IMR-90 (cell line): ENCODE measurements at regions of chr7 and their contacts with region 1.

Region 1: GRCh38 chr7:131424219-131424822 is 96.6 kb downstream of the MKLN1 start:
- DNase-seq: peak; percentile 58
- ATAC-seq: peak; percentile 87
- H3K4me3 ChIP-seq: no peak overlapping the region
- H3K27ac ChIP-seq: no peak overlapping the region
- H3K4me1 ChIP-seq: no peaks in the 10 kb centered on the region
- H3K27me3 ChIP-seq: no peaks in the 10 kb centered on the region
- CTCF ChIP-seq: peak; percentile 64
- POLR2A ChIP-seq: no peak
- RAD21 ChIP-seq: peak; percentile 66

Region 2: DNA sequence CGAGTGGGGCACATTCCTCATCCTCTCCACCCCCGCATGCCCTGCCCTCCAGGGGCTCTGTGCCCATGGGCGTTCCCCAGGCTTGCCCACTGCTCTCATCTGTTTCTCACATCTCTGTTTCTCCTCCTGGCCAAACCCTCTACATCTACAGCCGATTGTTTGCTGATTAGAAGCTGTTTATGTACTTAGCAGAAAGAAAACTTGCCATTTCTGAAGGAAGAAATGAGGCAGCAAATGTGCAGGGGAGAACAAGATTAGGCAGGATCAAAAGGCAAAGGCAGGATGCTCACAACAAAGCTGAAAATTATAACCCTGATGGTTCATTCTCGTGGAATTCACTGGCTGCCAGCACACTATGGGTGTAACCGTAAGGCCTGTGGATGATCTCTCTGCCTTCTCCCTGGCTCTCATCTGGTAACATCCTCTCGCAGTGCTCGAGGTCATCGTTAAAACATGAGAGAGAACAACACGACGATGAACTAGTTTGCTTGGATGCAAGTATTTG is 578.7 kb before region 1 on chr7:
- CTCF ChIA-PET with region 1: no interaction called
- POLR2A ChIA-PET with region 1: no interaction called
- dilution Hi-C with region 1: no loop called
- in situ Hi-C with region 1: no loop called
- intact Hi-C with region 1: no loop called
- DNase-seq: peak; percentile 89
- ATAC-seq: peak; percentile 89
- H3K4me3 ChIP-seq: no peak overlapping the region
- H3K27ac ChIP-seq: peak overlapping the region; percentile 87
- H3K4me1 ChIP-seq: peaks cover 6% of the 10 kb centered on the region
- H3K27me3 ChIP-seq: no peaks in the 10 kb centered on the region
- CTCF ChIP-seq: no peak
- POLR2A ChIP-seq: no peak
- RAD21 ChIP-seq: no peak

Region 3: DNA sequence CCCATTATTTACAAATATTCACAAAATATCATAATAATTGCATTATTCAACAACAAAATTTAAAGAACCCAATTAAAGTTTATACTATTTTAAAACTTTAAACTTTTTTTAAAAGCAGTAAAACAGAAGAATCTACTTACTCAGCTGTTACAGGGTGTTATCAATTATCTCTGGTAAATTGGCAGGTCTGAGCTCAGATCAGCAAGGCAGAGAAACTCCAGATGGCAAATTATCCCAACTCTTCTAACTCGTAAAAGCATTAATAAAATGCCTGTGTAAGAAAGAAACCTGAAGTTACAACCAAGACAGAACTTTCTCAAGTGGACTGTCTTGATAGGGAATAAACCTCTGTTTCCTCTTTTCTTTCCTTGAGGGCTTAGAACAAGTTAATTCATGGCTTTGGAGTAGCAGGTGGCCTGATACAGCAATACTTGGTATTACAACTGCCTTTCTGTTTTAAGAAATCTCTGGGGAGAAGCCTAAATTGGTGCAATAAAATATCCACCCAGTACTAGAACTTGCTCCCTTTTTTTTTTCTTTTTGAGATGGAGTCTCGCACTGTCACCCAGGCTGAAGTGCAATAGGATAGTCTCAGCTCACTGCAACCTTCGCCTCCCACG is 371.9 kb before region 1 on chr7:
- CTCF ChIA-PET with region 1: no interaction called
- POLR2A ChIA-PET with region 1: no interaction called
- dilution Hi-C with region 1: no loop called
- in situ Hi-C with region 1: no loop called
- intact Hi-C with region 1: no loop called
- DNase-seq: no peak
- ATAC-seq: no peak
- H3K4me3 ChIP-seq: no peak overlapping the region
- H3K27ac ChIP-seq: no peak overlapping the region
- H3K4me1 ChIP-seq: peaks cover 3% of the 10 kb centered on the region
- H3K27me3 ChIP-seq: no peaks in the 10 kb centered on the region
- CTCF ChIP-seq: no peak
- POLR2A ChIP-seq: no peak
- RAD21 ChIP-seq: no peak

Region 4: DNA sequence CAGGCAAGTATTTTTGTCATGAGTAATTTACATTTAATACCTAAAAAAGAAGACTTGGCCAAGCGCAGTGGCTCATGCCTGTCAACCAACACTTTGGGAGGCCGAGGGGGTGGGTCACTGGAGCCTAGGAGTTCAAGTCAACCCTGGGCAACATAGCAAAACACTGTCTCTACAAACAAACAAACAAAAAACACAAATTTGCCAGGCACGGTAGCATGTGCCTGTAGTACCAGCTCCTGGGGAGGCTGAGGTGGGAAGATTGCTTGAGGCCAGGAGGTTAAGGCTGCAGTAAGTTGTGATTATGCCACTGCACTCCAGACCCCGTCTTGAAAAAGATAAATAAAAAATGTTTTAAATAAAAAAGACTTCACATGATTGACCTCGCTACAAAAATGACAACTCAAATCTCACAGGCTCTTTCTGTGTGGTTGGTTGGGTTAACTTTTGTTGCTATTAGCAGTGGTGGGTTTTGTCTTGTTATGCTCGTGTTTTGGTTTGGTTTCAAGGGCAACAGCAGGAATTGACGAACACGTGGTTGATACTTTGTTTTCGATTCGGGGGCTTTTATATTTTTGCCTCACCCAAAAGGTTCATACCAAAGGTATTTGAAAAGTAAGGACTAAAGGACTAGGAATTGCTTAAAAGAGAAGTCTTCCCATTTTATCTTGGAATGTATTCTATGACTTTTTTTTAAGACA is 323.8 kb before region 1 on chr7:
- CTCF ChIA-PET with region 1: no interaction called
- POLR2A ChIA-PET with region 1: no interaction called
- dilution Hi-C with region 1: no loop called
- in situ Hi-C with region 1: no loop called
- intact Hi-C with region 1: no loop called
- DNase-seq: no peak
- ATAC-seq: no peak
- H3K4me3 ChIP-seq: no peak overlapping the region
- H3K27ac ChIP-seq: no peak overlapping the region
- H3K4me1 ChIP-seq: peaks cover 2% of the 10 kb centered on the region
- H3K27me3 ChIP-seq: no peaks in the 10 kb centered on the region
- CTCF ChIP-seq: no peak
- POLR2A ChIP-seq: no peak
- RAD21 ChIP-seq: no peak

Region 5: DNA sequence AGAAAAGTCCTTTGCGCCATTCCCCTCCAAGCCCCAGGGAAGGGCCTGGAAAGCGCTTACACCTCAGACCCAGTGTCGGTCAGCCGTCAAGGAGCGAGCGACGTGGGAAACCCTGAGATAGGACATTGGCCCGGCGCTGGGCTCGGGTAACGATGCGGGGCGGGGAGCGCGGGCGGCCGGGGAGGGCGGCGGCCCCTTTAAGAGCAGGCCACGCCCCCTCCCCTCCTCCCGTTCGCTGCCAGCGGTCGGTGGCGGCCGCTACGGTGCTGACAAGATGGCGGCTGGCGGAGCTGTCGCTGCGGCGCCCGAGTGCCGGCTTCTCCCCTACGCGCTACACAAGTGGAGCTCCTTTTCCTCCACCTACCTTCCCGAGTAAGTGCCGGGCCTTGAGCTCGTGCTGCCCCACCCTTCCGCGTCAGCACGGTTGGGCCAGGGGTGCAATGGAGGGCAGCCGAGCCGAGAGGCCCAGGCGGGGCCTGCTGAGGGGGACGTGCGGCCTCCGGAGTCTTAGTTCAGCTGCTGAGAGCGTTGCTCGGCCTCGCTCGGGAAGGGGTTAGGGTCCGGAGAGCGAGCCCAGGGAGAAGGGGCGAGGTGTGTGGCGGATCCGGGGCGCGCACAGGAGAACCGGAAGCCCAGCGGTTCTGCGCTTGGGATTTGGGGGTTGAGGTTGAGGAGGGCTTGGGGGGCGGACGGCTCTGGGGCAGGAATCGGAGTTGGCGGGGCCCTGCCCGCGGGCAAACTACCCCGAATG is 96.5 kb before region 1 on chr7 and contains the start of gene MKLN1:
- CTCF ChIA-PET with region 1: no interaction called
- POLR2A ChIA-PET with region 1: no interaction called
- dilution Hi-C with region 1: no loop called
- in situ Hi-C with region 1: no loop called
- intact Hi-C with region 1: loop called (anchors 2 kb)
- DNase-seq: peak; percentile 85
- ATAC-seq: peak; percentile 95
- H3K4me3 ChIP-seq: peak within 1 kb of the TSS; percentile 96
- H3K27ac ChIP-seq: peak within 1 kb of the TSS; percentile 100
- H3K4me1 ChIP-seq: peaks cover 7% of the 10 kb centered on the region; the same call in 1 of the 2 replicates
- H3K27me3 ChIP-seq: no peaks in the 10 kb centered on the region
- CTCF ChIP-seq: no peak
- POLR2A ChIP-seq: peak; percentile 93
- RAD21 ChIP-seq: no peak; the same call in 1 of the 2 replicates
- total RNA-seq, gene MKLN1: 52.0 and 65.8 TPM in 2 replicates

Region 6: GRCh38 chr7:131564640-131565039 is 140.3 kb after region 1 on chr7:
- CTCF ChIA-PET with region 1: no interaction called
- POLR2A ChIA-PET with region 1: no interaction called
- dilution Hi-C with region 1: no loop called
- in situ Hi-C with region 1: no loop called
- intact Hi-C with region 1: no loop called
- DNase-seq: no peak
- ATAC-seq: no peak
- H3K4me3 ChIP-seq: no peak overlapping the region
- H3K27ac ChIP-seq: no peak overlapping the region
- H3K4me1 ChIP-seq: no peaks in the 10 kb centered on the region
- H3K27me3 ChIP-seq: peaks cover 9% of the 10 kb centered on the region; the same call in 1 of the 2 replicates
- CTCF ChIP-seq: no peak
- POLR2A ChIP-seq: no peak
- RAD21 ChIP-seq: no peak